ENCODE measurements at regions of chr15 and their contacts with region 1.

Region 1: DNA sequence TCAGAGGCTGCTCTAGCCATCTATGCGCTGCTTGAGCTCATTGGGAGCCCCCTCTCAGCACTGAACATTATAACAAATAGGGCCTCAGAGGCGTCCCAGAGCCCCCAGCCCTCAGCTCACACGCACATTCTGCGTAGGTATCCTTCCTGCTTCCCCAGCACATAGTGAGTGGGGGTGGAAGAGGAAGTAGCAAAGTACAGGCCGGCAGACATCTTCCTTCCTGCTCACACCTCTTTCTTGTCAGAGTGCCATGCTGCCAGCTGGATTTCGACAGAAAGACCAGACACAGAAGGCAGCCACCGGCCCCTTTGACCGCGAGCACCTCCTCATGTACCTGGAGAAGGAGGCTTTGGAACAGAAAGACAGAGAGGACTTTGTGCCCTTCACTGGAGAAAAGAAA is 16.6 kb downstream of the TMOD2 start:
- DNase-seq: no peak
- ATAC-seq: no peak
- H3K4me3 ChIP-seq: no peak overlapping the region
- H3K27ac ChIP-seq: no peak overlapping the region
- H3K4me1 ChIP-seq: no peaks in the 10 kb centered on the region
- H3K27me3 ChIP-seq: no peaks in the 10 kb centered on the region
- CTCF ChIP-seq: no peak
- POLR2A ChIP-seq: no peak
- RAD21 ChIP-seq: no peak

Region 2: DNA sequence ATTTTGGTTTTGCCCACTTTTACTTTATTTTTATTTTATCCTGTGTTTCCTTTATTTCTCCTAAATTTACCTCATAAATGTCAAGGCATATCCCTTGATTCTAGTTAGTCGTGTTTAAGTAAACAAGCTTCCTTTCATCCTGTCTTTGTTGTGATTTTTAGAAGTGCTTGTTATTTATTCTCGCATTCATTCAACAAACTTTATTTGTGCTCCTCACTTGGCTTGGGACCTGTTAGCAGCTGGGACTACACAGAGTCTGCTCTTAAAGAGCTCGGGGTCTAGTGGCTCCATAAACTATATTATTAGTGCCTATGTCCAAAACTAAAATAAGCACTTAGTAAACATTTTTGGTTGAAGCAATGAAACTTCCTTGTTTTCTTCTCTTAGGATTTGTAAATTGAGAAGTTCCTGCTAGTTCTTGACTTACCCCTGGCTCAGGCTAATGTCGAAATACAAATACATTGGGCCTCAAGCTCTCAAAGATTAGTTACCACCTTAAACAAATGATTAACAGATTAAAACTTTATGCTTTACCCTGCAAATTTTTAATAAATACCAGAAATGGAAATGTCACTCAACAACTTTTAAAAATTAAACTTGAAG is 126.4 kb before region 1 on chr15:
- CTCF ChIA-PET with region 1: no interaction called
- POLR2A ChIA-PET with region 1: no interaction called
- dilution Hi-C with region 1: no loop called
- in situ Hi-C with region 1: loop called (anchors 5 kb)
- intact Hi-C with region 1: no loop called
- DNase-seq: no peak
- ATAC-seq: no peak
- H3K4me3 ChIP-seq: no peak overlapping the region
- H3K27ac ChIP-seq: no peak overlapping the region
- H3K4me1 ChIP-seq: no peaks in the 10 kb centered on the region
- H3K27me3 ChIP-seq: peaks cover 3% of the 10 kb centered on the region
- CTCF ChIP-seq: no peak
- POLR2A ChIP-seq: no peak
- RAD21 ChIP-seq: no peak

Measured in IMR-90 (cell line).